Activated CD8-positive, alpha-beta T cell treated with anti-CD3 and anti-CD28 coated beads, Interleukin-2, amount 10 ng/mL, durations not matched to agents 7 days and 5 days (primary cell): ENCODE measurements at regions of chr3 and their contacts with region 1.

Region 1: GRCh38 chr3:39279745-39280517 is at the start of gene CX3CR1:
- DNase-seq: peak; percentile 17
- ATAC-seq: no peak
- H3K4me3 Mint-ChIP-seq: no peak within 1 kb of the TSS
- H3K27ac Mint-ChIP-seq: no peak within 1 kb of the TSS
- H3K4me1 Mint-ChIP-seq: peaks cover 51% of the 10 kb centered on the region
- H3K27me3 Mint-ChIP-seq: peaks cover 14% of the 10 kb centered on the region
- total RNA-seq, gene CX3CR1: 0.42 to 0.95 TPM

Region 2: DNA sequence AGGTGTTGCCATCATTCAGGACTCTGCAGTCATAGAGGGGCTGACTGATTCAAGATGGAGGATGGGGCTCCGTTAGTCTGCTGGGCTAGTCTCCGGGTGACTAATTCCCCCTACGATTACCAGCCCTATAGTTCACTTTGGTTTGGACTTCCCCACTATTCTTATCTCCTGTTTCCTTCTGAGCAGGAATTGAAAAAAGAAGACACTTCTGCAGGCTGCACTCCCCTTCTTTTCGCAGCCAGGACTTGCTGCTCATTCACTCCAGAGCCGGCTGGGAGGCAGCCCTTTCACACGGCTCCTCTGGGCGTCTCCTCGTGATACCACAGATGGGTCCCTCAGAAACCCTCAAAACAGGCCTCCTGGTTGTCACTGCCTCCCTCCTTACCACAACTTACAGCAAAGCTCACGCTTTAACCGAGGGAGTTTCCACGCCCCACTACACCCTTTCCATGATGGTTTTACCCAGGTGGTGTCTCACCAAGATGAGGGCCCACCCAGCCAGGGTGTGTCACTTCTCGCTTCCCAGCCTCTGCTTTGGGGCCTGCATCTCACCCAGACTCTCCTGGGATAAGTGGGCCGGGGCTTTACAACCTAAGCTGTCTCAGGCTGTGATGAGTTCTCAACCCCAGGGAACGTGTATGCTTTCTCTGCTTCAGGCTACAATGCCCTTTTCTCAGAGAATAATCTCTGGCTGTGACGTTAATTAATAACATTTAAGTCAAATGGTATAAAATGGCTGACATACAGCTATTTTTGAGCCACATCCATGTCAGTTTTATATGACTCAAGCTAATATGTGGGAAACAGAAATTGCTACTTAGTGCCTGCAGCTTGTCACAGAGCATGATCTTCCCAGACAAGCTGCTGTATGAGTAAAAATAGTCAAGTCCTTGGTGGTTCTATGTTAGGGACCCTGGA is 12.0 kb before region 1 on chr3:
- CTCF ChIA-PET with region 1: interaction called, 10 read pairs
- POLR2A ChIA-PET with region 1: interaction called, 3 read pairs
- DNase-seq: peak; percentile 84
- ATAC-seq: peak; percentile 97
- H3K4me3 Mint-ChIP-seq: peak overlapping the region; percentile 54
- H3K27ac Mint-ChIP-seq: peak overlapping the region; percentile 89
- H3K4me1 Mint-ChIP-seq: peaks cover 36% of the 10 kb centered on the region
- H3K27me3 Mint-ChIP-seq: peaks cover 18% of the 10 kb centered on the region